ENCODE measurements at regions of chr17 and their contacts with region 1.

Region 1: GRCh38 chr17:15273141-15273793 is 8.1 kb upstream of the PMP22 start:
- DNase-seq: no peak
- H3K4me3 ChIP-seq: no peak overlapping the region
- H3K27ac ChIP-seq: no peak overlapping the region
- H3K4me1 ChIP-seq: no peaks in the 10 kb centered on the region
- H3K27me3 ChIP-seq: peaks cover 9% of the 10 kb centered on the region
- CTCF ChIP-seq: no peak

Region 2: GRCh38 chr17:15257258-15257788 is 15.9 kb before region 1 on chr17:
- CTCF ChIA-PET with region 1: no interaction called
- POLR2A ChIA-PET with region 1: no interaction called
- intact Hi-C with region 1: no loop called
- DNase-seq: peak; percentile 80
- H3K4me3 ChIP-seq: no peak overlapping the region
- H3K27ac ChIP-seq: no peak overlapping the region
- H3K4me1 ChIP-seq: no peaks in the 10 kb centered on the region
- H3K27me3 ChIP-seq: peaks cover 24% of the 10 kb centered on the region
- CTCF ChIP-seq: peak; percentile 84

Region 3: DNA sequence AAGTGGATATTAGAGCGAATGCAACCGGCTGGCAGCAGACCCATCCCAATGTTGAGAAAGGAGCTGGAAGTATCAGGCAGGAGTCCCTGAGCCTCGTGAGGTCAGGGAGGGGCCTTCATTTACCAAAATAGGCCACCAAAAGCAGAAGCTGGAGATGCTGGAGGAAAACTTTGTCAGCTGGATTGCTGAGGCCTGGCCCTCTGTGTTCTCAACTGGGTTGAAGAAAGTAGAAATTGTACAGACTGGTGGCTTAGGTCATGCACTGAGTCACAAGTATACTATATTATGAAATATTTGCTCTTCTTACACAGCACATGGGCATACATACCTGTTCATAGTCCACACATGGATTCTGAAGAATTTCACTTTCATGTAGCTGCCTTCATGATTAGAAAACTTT is 91.3 kb after region 1 on chr17:
- CTCF ChIA-PET with region 1: no interaction called
- POLR2A ChIA-PET with region 1: no interaction called
- intact Hi-C with region 1: loop called (anchors 10 kb)
- DNase-seq: no peak
- H3K4me3 ChIP-seq: no peak overlapping the region
- H3K27ac ChIP-seq: no peak overlapping the region
- H3K4me1 ChIP-seq: no peaks in the 10 kb centered on the region
- H3K27me3 ChIP-seq: peaks cover 3% of the 10 kb centered on the region
- CTCF ChIP-seq: no peak